ENCODE measurements at regions of chr5 and their contacts with region 1.

Region 1: GRCh38 chr5:95961617-95962474 is at the start of gene ELL2:
- DNase-seq: peak; percentile 81 to 99 (median 94)
- ATAC-seq: peak; percentile 87
- H3K4me3 ChIP-seq: peak within 1 kb of the TSS; percentile 66
- H3K4me3 Mint-ChIP-seq: peak within 1 kb of the TSS; percentile 96
- H3K27ac ChIP-seq: peak within 1 kb of the TSS; percentile 70 to 72
- H3K27ac Mint-ChIP-seq: peak within 1 kb of the TSS; percentile 95
- H3K4me1 ChIP-seq: peaks cover 33% of the 10 kb centered on the region
- H3K4me1 Mint-ChIP-seq: peaks cover 40% of the 10 kb centered on the region
- H3K27me3 ChIP-seq: no peaks in the 10 kb centered on the region
- H3K27me3 Mint-ChIP-seq: no peaks in the 10 kb centered on the region
- CTCF ChIP-seq: no peak
- total RNA-seq, gene ELL2: 93.5 to 98.1 TPM

Region 2: GRCh38 chr5:95554647-95555548 is 406.9 kb before region 1 on chr5 and contains the starts of genes ARSK and SKIC3:
- CTCF ChIA-PET with region 1: no interaction called
- POLR2A ChIA-PET with region 1: no interaction called
- intact Hi-C with region 1: loop called in 1 of 2 experiments (anchors 10 kb)
- DNase-seq: peak; percentile 83 to 98 (median 87)
- ATAC-seq: peak; percentile 85
- H3K4me3 ChIP-seq: peak within 1 kb of the TSS; percentile 78
- H3K4me3 Mint-ChIP-seq: peak within 1 kb of the TSS; percentile 98
- H3K27ac ChIP-seq: peak within 1 kb of the TSS; percentile 69 to 78
- H3K27ac Mint-ChIP-seq: peak within 1 kb of the TSS; percentile 91
- H3K4me1 ChIP-seq: peaks cover 19% of the 10 kb centered on the region
- H3K4me1 Mint-ChIP-seq: peaks cover 59% of the 10 kb centered on the region
- H3K27me3 ChIP-seq: no peaks in the 10 kb centered on the region
- H3K27me3 Mint-ChIP-seq: no peaks in the 10 kb centered on the region
- CTCF ChIP-seq: peak; percentile 26
- total RNA-seq, gene ARSK: 2.2 to 2.7 TPM
- total RNA-seq, gene SKIC3: 63.8 to 65.2 TPM

Region 3: GRCh38 chr5:95858661-95859326 is 103.1 kb before region 1 on chr5:
- CTCF ChIA-PET with region 1: interaction called, 6 read pairs
- POLR2A ChIA-PET with region 1: interaction called, 5 read pairs
- intact Hi-C with region 1: loop called (anchors 2 to 5 kb)
- DNase-seq: peak; percentile 82 to 94 (median 89)
- ATAC-seq: peak; percentile 96
- H3K4me3 ChIP-seq: no peak overlapping the region
- H3K4me3 Mint-ChIP-seq: no peak overlapping the region
- H3K27ac ChIP-seq: no peak overlapping the region
- H3K27ac Mint-ChIP-seq: peak overlapping the region; percentile 14
- H3K4me1 ChIP-seq: peaks cover 16% of the 10 kb centered on the region
- H3K4me1 Mint-ChIP-seq: peaks cover 42% of the 10 kb centered on the region
- H3K27me3 ChIP-seq: no peaks in the 10 kb centered on the region
- H3K27me3 Mint-ChIP-seq: peaks cover 13% of the 10 kb centered on the region
- CTCF ChIP-seq: peak; percentile 98

Region 4: DNA sequence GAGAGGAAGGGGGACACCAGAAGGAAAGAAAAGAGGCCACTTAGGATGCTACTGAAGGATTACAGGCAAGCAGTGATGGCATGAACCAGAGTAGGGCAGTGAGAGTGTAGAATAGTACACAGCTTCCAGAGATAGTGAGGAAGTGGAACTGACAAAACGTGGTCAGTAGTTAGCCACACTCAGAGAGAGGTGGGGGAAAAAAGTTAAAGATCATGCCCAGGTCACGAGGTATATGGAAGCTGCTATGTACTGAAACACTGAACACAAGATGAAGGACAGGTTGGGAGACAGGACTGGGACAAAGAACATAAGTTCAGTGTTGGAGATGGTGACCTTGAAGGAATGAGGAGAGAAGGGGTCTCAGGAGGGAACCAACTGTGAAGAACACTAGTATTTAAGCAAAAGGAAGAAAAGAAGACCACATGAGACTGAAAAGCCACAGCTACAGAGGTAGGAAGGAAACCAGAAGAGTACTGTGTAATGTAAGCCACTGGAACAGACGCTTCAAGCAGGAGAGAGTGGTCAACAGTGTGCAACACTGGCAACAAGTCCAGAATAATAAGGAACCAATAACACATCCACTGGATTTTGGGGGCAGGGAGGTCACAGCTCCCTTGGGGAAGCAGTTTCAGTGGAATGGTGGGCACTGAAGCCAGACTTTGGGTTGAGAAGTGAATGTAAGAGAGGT is 45.7 kb before region 1 on chr5:
- CTCF ChIA-PET with region 1: no interaction called
- POLR2A ChIA-PET with region 1: no interaction called
- intact Hi-C with region 1: loop called in 1 of 2 experiments (anchors 5 kb)
- DNase-seq: no peak
- ATAC-seq: no peak
- H3K4me3 ChIP-seq: no peak overlapping the region
- H3K4me3 Mint-ChIP-seq: no peak overlapping the region
- H3K27ac ChIP-seq: no peak overlapping the region
- H3K27ac Mint-ChIP-seq: no peak overlapping the region
- H3K4me1 ChIP-seq: no peaks in the 10 kb centered on the region
- H3K4me1 Mint-ChIP-seq: peaks cover 9% of the 10 kb centered on the region
- H3K27me3 ChIP-seq: no peaks in the 10 kb centered on the region
- H3K27me3 Mint-ChIP-seq: no peaks in the 10 kb centered on the region
- CTCF ChIP-seq: no peak

Region 5: DNA sequence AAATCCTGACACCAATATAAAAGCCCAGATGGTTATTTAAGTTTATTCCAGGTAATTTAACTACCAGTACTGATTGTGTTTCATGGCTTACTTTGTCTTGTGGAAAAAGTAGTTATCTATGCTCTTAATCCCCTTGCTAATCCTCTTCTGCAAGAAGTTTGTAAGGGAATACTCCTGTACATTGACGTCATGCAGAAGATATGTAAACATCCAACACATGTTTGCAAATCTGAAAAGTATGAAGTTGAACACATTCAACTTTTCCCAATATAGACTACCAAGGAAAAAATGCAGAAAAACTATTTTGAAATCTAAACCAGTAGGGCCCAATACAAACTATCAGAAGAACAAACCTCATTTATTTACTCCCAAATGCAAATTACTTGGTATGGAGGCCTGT is 56.1 kb after region 1 on chr5:
- CTCF ChIA-PET with region 1: no interaction called
- POLR2A ChIA-PET with region 1: no interaction called
- intact Hi-C with region 1: no loop called
- DNase-seq: no peak
- ATAC-seq: no peak
- H3K4me3 ChIP-seq: no peak overlapping the region
- H3K4me3 Mint-ChIP-seq: no peak overlapping the region
- H3K27ac ChIP-seq: no peak overlapping the region
- H3K27ac Mint-ChIP-seq: no peak overlapping the region
- H3K4me1 ChIP-seq: no peaks in the 10 kb centered on the region
- H3K4me1 Mint-ChIP-seq: no peaks in the 10 kb centered on the region
- H3K27me3 ChIP-seq: no peaks in the 10 kb centered on the region
- H3K27me3 Mint-ChIP-seq: peaks cover 6% of the 10 kb centered on the region
- CTCF ChIP-seq: no peak

Region 6: GRCh38 chr5:96662725-96663513 is 701.1 kb after region 1 on chr5:
- CTCF ChIA-PET with region 1: no interaction called
- POLR2A ChIA-PET with region 1: no interaction called
- intact Hi-C with region 1: loop called in 1 of 2 experiments (anchors 2 kb)
- DNase-seq: peak; percentile 55 to 93 (median 80)
- ATAC-seq: peak; percentile 72
- H3K4me3 ChIP-seq: peak overlapping the region; percentile 88
- H3K4me3 Mint-ChIP-seq: peak overlapping the region; percentile 96
- H3K27ac ChIP-seq: peak overlapping the region; percentile 68 to 77
- H3K27ac Mint-ChIP-seq: peak overlapping the region; percentile 95
- H3K4me1 ChIP-seq: peaks cover 25% of the 10 kb centered on the region
- H3K4me1 Mint-ChIP-seq: peaks cover 57% of the 10 kb centered on the region
- H3K27me3 ChIP-seq: no peaks in the 10 kb centered on the region
- H3K27me3 Mint-ChIP-seq: no peaks in the 10 kb centered on the region
- CTCF ChIP-seq: no peak